ENCODE measurements at regions of chr20 and their contacts with region 1.

Region 1: DNA sequence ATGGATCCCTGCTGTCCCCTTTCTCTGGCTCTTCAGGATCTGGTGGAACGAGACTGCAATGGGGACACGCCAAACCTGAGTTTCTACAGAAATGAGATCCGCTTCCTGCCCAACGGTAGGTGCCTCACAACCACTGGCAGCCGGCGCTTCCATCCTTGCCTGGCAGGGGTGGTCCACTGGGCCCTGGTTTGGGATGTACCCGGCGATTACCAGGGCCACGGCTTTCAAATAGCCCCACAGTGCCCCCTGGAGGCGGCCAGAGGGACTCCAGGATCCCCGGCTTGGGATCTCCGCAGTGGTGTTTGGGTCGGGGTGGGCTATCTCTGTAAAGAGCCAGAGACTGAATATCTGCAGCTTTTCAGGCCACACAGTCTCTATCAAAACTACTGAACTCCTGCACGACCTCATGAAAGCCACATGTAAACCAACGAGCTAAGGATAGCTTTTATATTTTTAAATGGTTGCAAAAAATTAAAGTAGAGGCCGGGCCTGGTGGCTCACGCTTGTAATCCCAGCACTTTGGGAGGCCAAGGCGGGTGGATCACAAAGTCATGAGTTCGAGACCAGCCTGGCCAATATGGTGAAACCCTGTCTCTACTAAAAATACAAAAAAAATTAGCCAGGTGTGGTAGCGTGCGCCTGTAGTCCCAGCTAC is 3.7 kb downstream of the OGFR start:
- DNase-seq: no peak
- ATAC-seq: peak; percentile 77
- H3K4me3 ChIP-seq: no peak overlapping the region
- H3K27ac ChIP-seq: no peak overlapping the region
- H3K4me1 ChIP-seq: peaks cover 18% of the 10 kb centered on the region
- H3K27me3 ChIP-seq: no peaks in the 10 kb centered on the region
- CTCF ChIP-seq: peak; percentile 85 to 91 (median 85)
- EP300 ChIP-seq: no peak
- POLR2A ChIP-seq: no peak
- RAD21 ChIP-seq: peak; percentile 74

Region 2: DNA sequence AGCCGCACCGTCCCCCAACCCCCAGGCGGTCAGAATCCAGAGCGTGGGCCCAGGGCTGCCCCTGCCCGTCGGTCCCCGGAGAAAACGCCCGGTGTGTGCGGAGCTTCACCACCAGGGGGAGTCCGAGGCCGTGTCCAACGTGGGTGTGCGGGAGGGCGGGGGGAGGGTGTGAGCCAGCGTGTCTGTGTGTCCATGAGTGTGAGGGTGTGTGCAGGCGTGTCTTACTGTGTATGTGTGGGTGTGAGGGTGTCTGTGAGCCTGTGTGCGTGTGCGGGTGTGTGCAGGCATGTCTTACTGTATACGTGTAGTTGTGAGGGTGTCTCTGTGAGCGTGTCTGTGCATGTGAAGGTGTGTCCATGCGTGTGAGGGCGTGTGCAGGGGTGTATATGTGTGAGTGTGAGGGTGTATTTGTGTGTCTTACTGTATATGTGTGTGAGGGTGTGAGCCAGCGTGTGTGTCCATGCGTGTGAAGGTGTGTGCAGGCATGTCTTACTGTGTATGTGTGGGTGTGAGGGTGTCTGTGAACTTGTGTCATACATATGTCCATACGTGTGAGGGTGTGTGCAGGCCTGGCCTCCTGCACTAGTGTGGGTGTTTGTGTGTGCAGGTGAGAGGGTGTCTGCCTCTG is 308.0 kb before region 1 on chr20:
- CTCF ChIA-PET with region 1: interaction called, 8 read pairs
- POLR2A ChIA-PET with region 1: no interaction called
- RAD21 ChIA-PET with region 1: interaction called, 3 read pairs
- SMC1A ChIA-PET with region 1: no interaction called
- in situ Hi-C with region 1: no loop called
- intact Hi-C with region 1: loop called (anchors 5 kb)
- DNase-seq: no peak
- ATAC-seq: peak; percentile 67
- H3K4me3 ChIP-seq: no peak overlapping the region
- H3K27ac ChIP-seq: no peak overlapping the region
- H3K4me1 ChIP-seq: peaks cover 18% of the 10 kb centered on the region
- H3K27me3 ChIP-seq: no peaks in the 10 kb centered on the region
- CTCF ChIP-seq: peak; percentile 80 to 93 (median 92)
- EP300 ChIP-seq: no peak
- POLR2A ChIP-seq: no peak
- RAD21 ChIP-seq: peak; percentile 85

Region 3: DNA sequence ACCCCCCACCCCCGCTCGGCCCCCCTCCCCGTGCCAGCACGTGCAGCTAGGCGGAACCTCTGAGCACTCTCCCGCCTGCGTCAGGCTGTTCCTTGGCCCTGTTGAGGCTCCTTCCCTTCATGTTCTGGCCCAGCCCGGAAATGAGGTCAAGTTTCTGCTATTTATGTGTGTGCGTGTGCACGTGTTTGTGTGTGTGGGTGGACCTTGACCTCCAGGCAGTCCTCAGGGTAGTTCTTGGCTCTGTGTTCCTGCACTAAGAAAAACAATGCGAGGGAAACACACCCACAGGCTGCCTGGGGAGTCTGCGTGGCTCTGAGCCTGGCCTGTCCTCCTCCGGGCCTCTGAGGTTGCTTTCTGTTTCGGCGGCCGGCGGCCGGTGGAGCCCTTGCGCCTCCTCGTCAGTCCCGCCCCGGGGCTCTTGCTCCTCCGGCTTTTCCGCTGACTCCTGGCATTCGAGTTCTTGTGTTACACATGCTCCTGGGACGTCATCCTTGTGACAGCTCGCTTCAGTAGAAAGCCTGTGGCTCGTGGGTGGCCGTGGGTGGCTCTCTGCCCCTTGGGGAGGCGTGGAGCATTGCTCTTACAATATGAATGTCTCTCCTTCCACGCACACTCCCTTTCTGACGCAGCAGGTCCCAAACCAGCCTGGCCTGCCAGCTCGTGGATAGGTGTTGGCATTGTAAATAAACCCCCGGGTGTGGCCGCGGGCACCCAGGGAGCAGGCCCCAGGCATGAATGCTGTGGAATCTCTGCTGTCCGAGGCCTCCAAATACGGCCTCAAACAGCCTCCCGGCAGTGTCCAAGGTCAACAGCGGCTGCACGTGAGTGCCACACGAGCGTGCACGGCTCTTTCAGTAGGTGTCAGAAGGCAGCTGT is 156.0 kb before region 1 on chr20:
- CTCF ChIA-PET with region 1: no interaction called
- POLR2A ChIA-PET with region 1: no interaction called
- RAD21 ChIA-PET with region 1: no interaction called
- SMC1A ChIA-PET with region 1: no interaction called
- in situ Hi-C with region 1: no loop called
- intact Hi-C with region 1: loop called (anchors 5 kb)
- DNase-seq: peak; percentile 85
- ATAC-seq: peak; percentile 84
- H3K4me3 ChIP-seq: peak overlapping the region; percentile 69
- H3K27ac ChIP-seq: peak overlapping the region; percentile 98
- H3K4me1 ChIP-seq: peaks cover 40% of the 10 kb centered on the region
- H3K27me3 ChIP-seq: no peaks in the 10 kb centered on the region
- CTCF ChIP-seq: no peak
- EP300 ChIP-seq: peak; percentile 81 to 88; a peak in 3 of 4 replicates
- POLR2A ChIP-seq: peak; percentile 77
- RAD21 ChIP-seq: no peak

Region 4: DNA sequence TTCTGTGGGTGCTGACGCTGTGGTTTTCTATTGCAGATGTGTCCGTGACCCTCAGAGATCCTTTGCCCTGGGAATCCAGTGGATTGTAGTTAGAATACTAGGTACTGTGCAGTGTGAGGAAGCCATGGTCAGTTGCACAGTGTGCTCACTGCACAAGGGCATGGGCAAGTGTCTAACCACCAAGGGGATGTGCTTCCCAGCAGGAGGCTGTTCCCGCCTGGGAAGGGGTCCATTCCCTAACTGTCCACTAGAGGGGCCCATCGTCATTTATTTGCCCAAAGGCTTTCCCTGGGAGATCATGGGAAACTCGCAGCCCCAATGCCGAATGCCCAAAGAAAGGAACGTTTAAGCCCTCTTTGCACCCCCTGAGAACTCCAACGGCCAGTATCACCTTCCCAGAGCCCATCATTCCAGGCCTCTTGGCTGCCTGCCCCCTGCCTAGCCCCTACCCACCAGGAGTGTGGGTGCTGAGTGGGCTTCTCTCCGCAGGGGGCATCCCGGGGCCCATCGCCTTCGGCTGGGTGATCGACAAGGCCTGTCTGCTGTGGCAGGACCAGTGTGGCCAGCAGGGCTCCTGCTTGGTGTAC is 139.8 kb before region 1 on chr20:
- CTCF ChIA-PET with region 1: interaction called, 4 read pairs
- POLR2A ChIA-PET with region 1: no interaction called
- RAD21 ChIA-PET with region 1: no interaction called
- SMC1A ChIA-PET with region 1: no interaction called
- in situ Hi-C with region 1: no loop called
- intact Hi-C with region 1: loop called (anchors 1 kb)
- DNase-seq: no peak
- ATAC-seq: peak; percentile 59
- H3K4me3 ChIP-seq: no peak overlapping the region
- H3K27ac ChIP-seq: no peak overlapping the region
- H3K4me1 ChIP-seq: no peaks in the 10 kb centered on the region
- H3K27me3 ChIP-seq: no peaks in the 10 kb centered on the region
- CTCF ChIP-seq: peak; percentile 60 to 79 (median 67)
- EP300 ChIP-seq: no peak
- POLR2A ChIP-seq: no peak
- RAD21 ChIP-seq: peak; percentile 73

Region 5: DNA sequence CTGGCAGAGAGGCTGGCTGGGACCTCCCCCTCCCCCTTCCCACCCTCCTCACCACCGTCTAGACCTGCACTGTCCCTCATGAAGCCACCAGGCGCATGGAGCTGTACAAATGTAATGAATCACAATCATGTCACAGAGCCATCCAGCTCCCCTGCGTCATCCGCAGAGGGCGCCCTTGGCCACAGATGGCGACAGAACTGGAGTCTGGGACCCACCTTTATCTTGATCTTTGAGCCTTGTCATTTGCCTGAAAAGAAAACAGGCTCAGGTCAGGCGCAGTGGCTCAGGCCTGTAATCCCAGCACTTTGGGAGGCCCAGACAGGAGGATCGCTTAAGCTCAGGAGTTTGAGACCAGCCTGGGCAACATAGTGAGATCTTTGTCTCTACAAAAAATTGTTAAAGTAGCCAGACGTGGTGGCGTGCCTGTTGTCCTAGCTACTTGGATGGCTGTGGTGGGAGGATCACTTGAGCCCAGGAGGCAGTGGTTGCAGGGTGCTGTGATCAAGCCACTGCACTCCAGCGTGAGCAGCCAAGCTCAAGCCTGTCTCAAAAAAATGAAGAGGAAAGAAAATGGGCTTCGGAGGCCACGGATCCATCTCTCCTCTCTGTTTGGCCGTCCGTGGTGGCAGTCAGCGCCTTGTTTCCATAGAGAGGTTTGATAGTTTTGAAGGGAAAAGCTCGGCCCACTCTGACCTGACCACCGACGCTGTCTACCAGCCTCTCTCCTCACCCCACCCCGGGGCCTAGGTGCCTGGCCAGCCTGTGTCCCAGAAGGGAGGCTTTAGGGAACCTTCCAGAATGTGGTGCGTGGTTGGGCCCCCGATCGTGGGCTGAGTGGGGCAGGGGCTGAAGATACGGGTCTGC is 14.7 kb after region 1 on chr20:
- CTCF ChIA-PET with region 1: interaction called, 12 read pairs
- POLR2A ChIA-PET with region 1: interaction called, 4 read pairs
- RAD21 ChIA-PET with region 1: interaction called, 5 read pairs
- SMC1A ChIA-PET with region 1: no interaction called
- in situ Hi-C with region 1: no loop called
- intact Hi-C with region 1: no loop called
- DNase-seq: no peak
- ATAC-seq: peak; percentile 88
- H3K4me3 ChIP-seq: no peak overlapping the region
- H3K27ac ChIP-seq: no peak overlapping the region
- H3K4me1 ChIP-seq: 0 out of 2 replicates have a peak, but pooled peaks cover 2% of the 10 kb centered on the region
- H3K27me3 ChIP-seq: peaks cover 0 to 2% of the 10 kb centered on the region in 2 experiments; a peak in 3 of 4 replicates
- CTCF ChIP-seq: peak; percentile 69 to 80 (median 74)
- EP300 ChIP-seq: no peak
- POLR2A ChIP-seq: no peak
- RAD21 ChIP-seq: peak; percentile 72

Measured in GM12878 (cell line).